Lower leg skin (tissue), 4 donors: ENCODE measurements at regions of chr15 and their contacts with region 1.

Region 1: DNA sequence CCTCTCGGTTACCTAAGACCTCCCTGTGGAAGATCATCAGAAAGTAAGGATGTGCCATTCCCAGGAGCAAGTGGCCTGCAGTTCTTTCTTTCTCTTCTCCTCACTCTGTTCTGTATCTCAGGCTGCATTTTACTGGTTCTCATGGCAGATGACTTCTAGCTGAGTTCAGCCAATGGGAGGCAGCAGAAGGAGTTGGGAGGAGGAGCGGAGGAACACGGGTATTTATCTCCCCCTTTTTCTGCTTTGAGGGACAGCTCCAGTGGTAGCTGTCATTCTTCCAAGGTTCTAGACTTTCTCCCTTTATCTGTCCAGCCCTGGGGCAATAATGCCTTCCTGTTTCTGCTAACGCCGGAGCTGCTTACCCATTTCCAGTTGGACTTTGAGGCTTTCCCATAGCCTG is 339.9 kb downstream of the NR2F2 start:
- DNase-seq: no peak
- H3K4me3 ChIP-seq: no peak overlapping the region
- CTCF ChIP-seq: no peak
- POLR2A ChIP-seq: no peak

Region 2: DNA sequence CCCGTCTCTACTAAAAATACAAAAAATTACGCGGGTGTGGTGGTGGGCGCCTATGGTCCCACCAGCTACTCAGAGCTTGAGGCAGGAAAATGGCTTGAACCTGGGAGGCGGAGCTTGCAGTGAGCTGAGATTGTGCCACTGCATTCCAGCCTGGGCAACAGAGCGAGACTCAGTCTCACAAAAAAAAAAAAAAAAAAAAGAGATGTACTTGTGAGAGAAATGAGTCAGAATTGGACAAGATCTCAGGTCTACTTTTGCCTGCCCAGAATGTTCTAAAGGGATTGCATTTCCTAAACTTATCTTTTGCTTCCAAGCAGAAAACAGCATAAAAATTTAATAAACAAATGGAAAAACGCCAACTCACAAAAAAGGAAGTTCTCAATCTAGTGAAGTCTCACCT is 172.4 kb before region 1 on chr15:
- intact Hi-C with region 1: loop called (anchors 5 kb)
- DNase-seq: no peak
- H3K4me3 ChIP-seq: no peak overlapping the region
- CTCF ChIP-seq: no peak
- POLR2A ChIP-seq: no peak